ENCODE measurements at regions of chr14 and their contacts with region 1.

Region 1: DNA sequence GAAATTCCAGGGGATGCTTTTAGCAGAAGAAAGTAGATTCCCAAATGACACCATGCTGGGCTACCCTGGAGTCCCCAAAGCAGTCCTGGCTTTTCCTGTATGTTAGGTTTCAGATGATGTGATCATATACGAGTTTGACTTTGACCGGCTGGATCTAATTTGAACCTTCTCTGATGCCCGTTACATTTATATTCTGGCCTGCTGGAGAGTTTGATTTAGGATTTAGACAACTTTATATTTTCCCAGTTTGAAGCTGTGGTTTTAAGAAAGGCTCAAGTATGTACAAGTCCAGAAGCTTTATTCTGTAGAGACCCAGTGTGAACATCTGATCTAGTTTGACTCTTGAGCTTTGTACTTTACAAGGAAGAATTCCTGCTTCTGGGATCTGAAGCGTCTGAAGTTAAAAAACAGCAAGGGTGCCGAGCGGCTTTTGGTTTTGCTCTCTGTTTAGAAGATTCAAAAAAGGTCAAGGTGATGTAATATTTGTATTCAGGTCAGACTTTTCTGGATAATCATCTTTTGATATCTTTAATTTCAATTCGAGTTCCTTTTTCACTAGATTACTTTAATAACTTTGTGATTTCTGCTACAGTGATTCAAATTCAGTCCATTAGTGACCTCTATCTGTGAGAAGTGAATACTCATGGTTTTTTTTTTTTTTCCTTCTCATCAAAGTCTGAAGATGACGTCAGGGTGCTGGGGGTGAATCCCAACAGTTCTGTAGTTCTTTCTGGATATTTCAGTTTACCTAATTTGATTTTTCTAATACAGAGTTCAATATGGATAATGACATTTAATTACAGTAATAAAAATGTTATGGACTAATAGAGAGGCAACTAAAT is 6.3 kb downstream of the FLRT2 start:
- DNase-seq: peak; percentile 56
- H3K4me3 ChIP-seq: peak overlapping the region; percentile 22 to 90 (median 89)
- H3K27ac ChIP-seq: peak overlapping the region; percentile 32
- H3K4me1 ChIP-seq: peaks cover 24% of the 10 kb centered on the region
- H3K27me3 ChIP-seq: no peaks in the 10 kb centered on the region
- CTCF ChIP-seq: peak; percentile 42 to 47

Region 2: GRCh38 chr14:85276979-85277228 is 259.3 kb before region 1 on chr14:
- CTCF ChIA-PET with region 1: no interaction called
- dilution Hi-C with region 1: no loop called
- in situ Hi-C with region 1: no loop called
- intact Hi-C with region 1: loop called (anchors 2 kb)
- DNase-seq: no peak
- H3K4me3 ChIP-seq: no peak overlapping the region
- H3K27ac ChIP-seq: no peak overlapping the region
- H3K4me1 ChIP-seq: peaks cover 6% of the 10 kb centered on the region
- H3K27me3 ChIP-seq: no peaks in the 10 kb centered on the region
- CTCF ChIP-seq: no peak

Measured in mammary epithelial cell (primary cell).